Colonic mucosa (tissue), 4 donors: ENCODE measurements at regions of chr2 and their contacts with region 1.

Region 1: DNA sequence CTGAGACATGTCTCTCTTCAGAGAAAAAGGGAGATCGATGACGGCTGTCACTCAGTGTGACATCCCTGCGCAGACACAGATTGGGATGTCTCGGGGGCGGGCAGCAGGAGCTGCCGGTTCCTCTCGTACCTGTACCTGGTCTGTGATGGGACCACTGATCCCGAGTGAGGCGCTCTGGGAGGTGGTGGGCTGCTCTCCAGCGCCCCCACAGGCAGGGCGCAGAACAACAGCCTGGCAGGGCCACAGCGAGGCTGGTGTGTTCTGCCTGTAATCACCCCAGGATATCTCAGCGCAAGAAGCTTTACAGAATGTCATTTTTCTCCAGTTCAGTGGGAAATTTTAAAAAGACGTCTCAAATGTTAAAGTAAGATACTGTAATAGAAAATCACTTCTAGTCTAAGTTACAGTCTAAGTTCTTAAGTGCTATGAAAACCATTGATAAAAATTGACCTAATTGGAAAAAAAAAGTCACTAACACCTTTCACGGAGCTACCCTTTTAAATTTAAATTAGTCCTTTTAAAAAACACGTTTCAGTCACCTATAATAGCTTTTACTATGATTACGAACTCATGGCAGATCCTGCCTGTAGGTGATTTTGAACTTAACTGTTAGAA is 189.8 kb downstream of the SNTG2 start:
- DNase-seq: no peak
- H3K4me3 ChIP-seq: no peak overlapping the region
- H3K27ac ChIP-seq: no peak overlapping the region
- H3K4me1 ChIP-seq: no peaks in the 10 kb centered on the region
- H3K27me3 ChIP-seq: no peaks in the 10 kb centered on the region
- CTCF ChIP-seq: peak; percentile 92

Region 2: DNA sequence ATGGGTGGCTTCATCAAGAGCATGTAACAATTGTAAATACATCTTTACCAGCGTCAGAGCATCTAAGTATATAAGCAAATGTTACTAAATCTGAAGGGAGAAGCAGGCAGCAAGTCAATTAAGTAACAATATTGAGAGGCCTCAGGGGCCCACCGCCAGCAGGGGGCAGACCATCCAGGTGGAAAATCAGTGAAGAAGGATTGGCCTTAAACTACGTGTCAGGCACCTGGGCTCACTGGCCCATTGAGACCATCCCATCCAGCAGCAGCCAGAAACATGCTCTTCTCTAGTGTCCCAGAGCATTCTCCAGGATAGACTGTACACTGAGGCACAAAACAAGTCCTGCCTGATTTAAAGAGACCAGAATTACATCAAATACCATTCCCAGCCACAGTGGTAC is 286.0 kb before region 1 on chr2:
- intact Hi-C with region 1: loop called (anchors 10 kb)
- DNase-seq: peak; percentile 64
- H3K4me3 ChIP-seq: no peak overlapping the region
- H3K27ac ChIP-seq: no peak overlapping the region
- H3K4me1 ChIP-seq: no peaks in the 10 kb centered on the region
- H3K27me3 ChIP-seq: no peaks in the 10 kb centered on the region
- CTCF ChIP-seq: peak; percentile 36